ENCODE measurements at regions of chr19 and their contacts with region 1.

Region 1: DNA sequence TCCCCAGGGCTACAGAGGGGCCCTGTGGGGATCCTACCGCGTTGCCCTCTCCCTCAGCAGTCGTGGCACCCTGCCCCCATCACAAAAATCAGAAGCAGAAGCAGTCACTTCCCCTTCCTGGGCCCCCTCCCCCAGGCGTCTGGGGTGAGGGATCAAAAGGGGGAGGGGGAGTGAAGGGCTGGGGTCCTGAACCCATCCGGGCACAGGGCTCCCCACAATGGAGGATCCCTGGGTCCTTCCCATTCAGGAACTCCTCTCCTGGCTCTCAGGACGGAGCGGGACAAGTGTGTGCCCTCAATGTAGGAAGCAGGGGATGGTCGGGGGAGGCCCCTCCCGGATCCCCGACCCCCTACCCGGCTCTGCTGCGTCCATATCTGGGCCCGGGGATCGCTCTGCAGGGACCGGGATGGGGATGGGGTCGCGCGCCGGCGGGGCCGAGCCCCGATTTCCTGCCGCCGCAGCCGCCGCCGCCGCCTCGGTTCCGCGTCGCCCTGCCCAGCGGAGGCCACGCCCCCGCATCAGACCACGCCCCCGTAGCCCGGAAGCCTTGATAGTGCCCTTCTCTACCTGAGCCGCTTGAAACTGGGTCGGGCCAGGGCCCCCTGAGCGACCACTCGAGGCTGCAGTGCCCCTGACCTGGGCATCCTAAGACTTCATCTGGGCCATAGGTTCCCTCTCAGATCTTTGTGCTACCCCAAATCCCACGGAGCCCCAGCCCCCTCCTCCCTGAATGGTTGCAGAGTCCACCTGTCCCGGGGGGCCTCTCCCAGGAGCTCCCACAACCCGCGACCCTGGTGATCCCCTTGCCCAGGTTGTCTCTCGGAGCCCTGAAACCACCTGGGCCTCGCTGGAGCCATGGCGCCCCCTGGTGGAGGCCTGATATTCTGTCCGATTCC is at the start of gene GMIP:
- DNase-seq: peak; percentile 93
- ATAC-seq: peak; percentile 90
- H3K4me3 ChIP-seq: peak within 1 kb of the TSS; percentile 92 to 100 (median 95)
- H3K4me3 Mint-ChIP-seq: peak within 1 kb of the TSS; percentile 99
- H3K27ac ChIP-seq: peak within 1 kb of the TSS; percentile 95 to 98
- H3K27ac Mint-ChIP-seq: peak within 1 kb of the TSS; percentile 98
- H3K4me1 ChIP-seq: peaks cover 17 to 21% of the 10 kb centered on the region in 2 donors
- H3K4me1 Mint-ChIP-seq: peaks cover 18% of the 10 kb centered on the region
- H3K27me3 ChIP-seq: no peaks in the 10 kb centered on the region
- H3K27me3 Mint-ChIP-seq: no peaks in the 10 kb centered on the region
- CTCF ChIP-seq: peak; percentile 81
- total RNA-seq, gene GMIP: 112 and 114 TPM in 2 replicates

Region 2: GRCh38 chr19:19531951-19532805 is 111.2 kb before region 1 on chr19:
- CTCF ChIA-PET with region 1: interaction called, 49 read pairs
- POLR2A ChIA-PET with region 1: interaction called, 13 read pairs
- intact Hi-C with region 1: loop called (anchors 1 kb)
- DNase-seq: peak; percentile 87
- ATAC-seq: peak; percentile 78
- H3K4me3 ChIP-seq: no peak overlapping the region
- H3K4me3 Mint-ChIP-seq: no peak overlapping the region
- H3K27ac ChIP-seq: no peak overlapping the region
- H3K27ac Mint-ChIP-seq: peak overlapping the region; percentile 86
- H3K4me1 ChIP-seq: peaks cover 7 to 9% of the 10 kb centered on the region in 2 donors
- H3K4me1 Mint-ChIP-seq: peaks cover 6% of the 10 kb centered on the region
- H3K27me3 ChIP-seq: peaks cover 0 to 1% (median 0%) of the 10 kb centered on the region in 4 experiments
- H3K27me3 Mint-ChIP-seq: no peaks in the 10 kb centered on the region
- CTCF ChIP-seq: peak; percentile 95

Region 3: DNA sequence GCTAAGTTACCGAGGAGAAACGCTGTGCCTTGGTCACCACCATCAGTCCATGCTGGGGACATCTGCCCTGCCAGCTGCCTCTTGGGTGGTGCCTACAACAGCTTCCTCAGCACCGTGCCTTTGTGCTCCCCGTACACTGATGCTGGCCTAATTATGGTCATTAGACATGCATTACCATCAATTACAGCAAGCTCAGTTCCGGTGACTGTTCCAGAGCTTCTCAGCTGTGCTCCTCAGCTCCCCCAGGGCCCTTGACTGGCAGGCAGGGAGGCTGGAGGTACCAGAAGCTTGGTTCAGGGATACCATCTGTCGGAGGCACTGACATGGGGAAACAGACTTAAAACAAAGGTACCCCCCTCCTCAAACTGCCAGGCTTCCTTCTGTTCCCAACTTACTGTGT is 65.2 kb before region 1 on chr19:
- CTCF ChIA-PET with region 1: no interaction called
- POLR2A ChIA-PET with region 1: no interaction called
- intact Hi-C with region 1: no loop called
- DNase-seq: no peak
- ATAC-seq: no peak
- H3K4me3 ChIP-seq: no peak overlapping the region
- H3K4me3 Mint-ChIP-seq: no peak overlapping the region
- H3K27ac ChIP-seq: no peak overlapping the region
- H3K27ac Mint-ChIP-seq: no peak overlapping the region
- H3K4me1 ChIP-seq: no peaks in the 10 kb centered on the region
- H3K4me1 Mint-ChIP-seq: no peaks in the 10 kb centered on the region
- H3K27me3 ChIP-seq: no peaks in the 10 kb centered on the region
- H3K27me3 Mint-ChIP-seq: no peaks in the 10 kb centered on the region
- CTCF ChIP-seq: no peak

Region 4: DNA sequence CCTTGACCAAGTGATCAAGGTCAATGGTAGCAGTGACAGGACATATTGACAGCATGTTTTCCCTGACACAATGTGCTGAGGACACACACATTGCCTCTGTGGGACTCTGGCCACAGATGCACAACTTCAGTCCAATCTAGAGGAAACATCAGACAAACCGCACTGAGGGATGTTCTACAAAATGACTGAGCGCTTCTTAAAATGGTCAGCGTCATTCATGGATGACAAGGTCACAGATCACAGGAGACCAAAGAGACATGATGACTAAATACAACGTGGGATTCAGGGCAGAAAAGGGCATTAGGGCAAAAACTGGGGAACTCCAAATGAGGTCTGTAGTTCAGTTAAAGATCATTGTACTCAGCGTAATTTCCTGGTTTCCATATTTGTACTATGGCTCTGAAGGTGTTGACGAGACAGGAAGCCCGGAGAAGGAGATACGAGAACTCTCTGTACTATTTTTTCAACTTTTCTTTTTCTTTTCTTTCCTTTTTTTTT is 45.5 kb before region 1 on chr19:
- CTCF ChIA-PET with region 1: no interaction called
- POLR2A ChIA-PET with region 1: no interaction called
- intact Hi-C with region 1: loop called (anchors 1 kb)
- DNase-seq: peak; percentile 76
- ATAC-seq: peak; percentile 71
- H3K4me3 ChIP-seq: peak overlapping the region in 1 of 5 experiments; percentile 15
- H3K4me3 Mint-ChIP-seq: peak overlapping the region; percentile 76
- H3K27ac ChIP-seq: peak overlapping the region; percentile 48 to 79
- H3K27ac Mint-ChIP-seq: peak overlapping the region; percentile 91
- H3K4me1 ChIP-seq: peaks cover 5 to 27% of the 10 kb centered on the region in 2 donors
- H3K4me1 Mint-ChIP-seq: peaks cover 40% of the 10 kb centered on the region
- H3K27me3 ChIP-seq: no peaks in the 10 kb centered on the region
- H3K27me3 Mint-ChIP-seq: no peaks in the 10 kb centered on the region
- CTCF ChIP-seq: no peak

Region 5: DNA sequence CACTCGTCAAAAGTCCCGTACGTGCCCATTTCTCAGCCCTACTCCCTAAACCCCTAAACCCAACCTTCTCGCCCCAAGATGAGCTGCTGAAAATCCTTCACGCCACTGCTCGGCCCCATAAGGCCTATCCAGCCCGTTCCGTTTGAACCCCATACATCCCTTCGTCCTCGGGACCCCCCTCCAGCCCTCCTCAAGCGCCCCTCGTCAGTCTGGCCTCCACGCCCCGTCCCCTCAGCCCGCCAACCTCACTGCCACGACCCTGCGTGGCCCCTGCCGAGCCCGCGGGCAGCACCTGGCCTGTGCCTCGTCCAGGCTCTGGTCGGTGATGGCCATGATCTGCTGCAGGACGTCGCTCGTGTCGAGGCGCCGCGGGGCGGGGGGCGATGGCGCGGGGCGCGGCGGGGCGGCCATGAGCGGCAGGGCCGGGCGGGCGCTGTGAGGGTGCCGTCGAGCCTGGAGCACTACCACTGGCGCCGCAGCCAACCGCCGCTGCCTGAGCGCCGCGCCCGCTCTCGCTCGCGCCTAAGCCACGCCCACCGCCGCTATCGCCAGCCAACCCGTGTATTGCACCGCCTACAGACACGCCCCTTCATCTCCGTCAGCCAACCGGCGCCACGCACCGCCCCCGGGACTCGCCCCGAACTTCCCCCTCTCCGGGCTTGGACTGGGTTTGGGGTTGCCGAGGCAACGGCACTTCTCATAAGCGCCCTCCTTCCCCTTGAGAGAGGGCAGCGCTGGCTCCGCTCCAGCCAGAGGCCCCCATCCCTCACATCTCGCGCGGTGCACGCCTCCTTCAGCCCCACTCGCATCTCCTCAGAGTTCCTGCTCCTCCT is 25.0 kb before region 1 on chr19 and contains the start of gene PBX4:
- CTCF ChIA-PET with region 1: interaction called, 6 read pairs
- POLR2A ChIA-PET with region 1: no interaction called
- intact Hi-C with region 1: loop called (anchors 1 kb)
- DNase-seq: peak; percentile 99
- ATAC-seq: peak; percentile 99
- H3K4me3 ChIP-seq: peak within 1 kb of the TSS in 4 of 5 experiments; percentile 48 to 64 (median 56)
- H3K4me3 Mint-ChIP-seq: peak within 1 kb of the TSS; percentile 89
- H3K27ac ChIP-seq: peak within 1 kb of the TSS; percentile 51 to 70
- H3K27ac Mint-ChIP-seq: peak within 1 kb of the TSS; percentile 89
- H3K4me1 ChIP-seq: peaks cover 11 to 16% of the 10 kb centered on the region in 2 donors
- H3K4me1 Mint-ChIP-seq: peaks cover 24% of the 10 kb centered on the region
- H3K27me3 ChIP-seq: no peaks in the 10 kb centered on the region
- H3K27me3 Mint-ChIP-seq: no peaks in the 10 kb centered on the region
- CTCF ChIP-seq: no peak
- total RNA-seq, gene PBX4: 11.7 and 11.8 TPM in 2 replicates

Region 6: DNA sequence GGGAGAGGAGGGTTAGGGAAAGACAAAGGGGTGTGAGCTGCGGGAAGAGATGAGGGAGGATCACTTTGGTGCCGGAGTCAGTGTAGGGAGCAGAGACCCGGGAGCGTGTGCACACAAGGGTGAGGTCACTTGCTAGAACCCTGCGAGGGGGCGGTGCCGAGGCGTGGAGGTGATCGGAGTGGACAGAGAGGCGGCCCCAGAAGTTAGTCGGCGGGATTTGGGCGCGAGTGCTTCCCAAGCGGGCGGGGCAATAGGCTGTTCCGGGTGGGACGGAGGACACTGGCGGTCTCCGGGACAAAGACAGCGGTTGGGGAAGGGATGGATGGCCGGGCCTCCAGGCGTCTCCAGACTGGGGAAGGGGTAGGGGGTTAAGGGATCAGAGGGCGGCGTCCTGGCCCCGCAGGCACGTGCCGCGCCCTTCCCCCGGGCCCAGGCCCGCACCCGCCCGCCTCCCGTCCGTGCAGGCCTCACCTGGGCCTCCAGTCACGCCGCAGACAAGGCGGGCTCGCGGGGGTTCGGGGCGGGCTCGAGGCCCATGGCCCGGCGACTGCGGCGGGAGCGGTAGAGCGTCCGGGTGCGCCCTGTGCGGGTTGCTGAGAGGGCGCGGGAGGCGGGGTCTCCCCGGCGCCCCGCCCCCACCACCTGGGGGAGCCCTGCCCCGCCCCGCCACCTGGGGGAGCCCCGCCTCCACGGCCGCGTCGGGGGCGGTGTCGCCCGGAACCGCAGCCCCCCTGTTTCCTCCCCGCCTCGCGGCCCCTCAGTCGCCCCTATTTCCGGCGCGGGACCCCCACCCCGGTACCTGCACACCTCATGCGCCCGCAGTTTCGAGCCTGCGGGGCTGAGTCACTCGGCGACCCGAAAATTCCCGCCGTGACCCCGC is 15.5 kb before region 1 on chr19 and contains the start of gene LPAR2:
- CTCF ChIA-PET with region 1: interaction called, 5 read pairs
- POLR2A ChIA-PET with region 1: interaction called, 16 read pairs
- intact Hi-C with region 1: loop called (anchors 1 kb)
- DNase-seq: peak; percentile 85
- ATAC-seq: peak; percentile 90
- H3K4me3 ChIP-seq: peak within 1 kb of the TSS; percentile 36 to 79 (median 66)
- H3K4me3 Mint-ChIP-seq: peak within 1 kb of the TSS; percentile 92
- H3K27ac ChIP-seq: peak within 1 kb of the TSS; percentile 47 to 71
- H3K27ac Mint-ChIP-seq: peak within 1 kb of the TSS; percentile 95
- H3K4me1 ChIP-seq: peaks cover 7 to 15% of the 10 kb centered on the region in 2 donors
- H3K4me1 Mint-ChIP-seq: peaks cover 20% of the 10 kb centered on the region
- H3K27me3 ChIP-seq: no peaks in the 10 kb centered on the region
- H3K27me3 Mint-ChIP-seq: no peaks in the 10 kb centered on the region
- CTCF ChIP-seq: no peak
- total RNA-seq, gene LPAR2: 27.1 and 30.3 TPM in 2 replicates